Common myeloid progenitor, CD34-positive (primary cell): ENCODE measurements at regions of chr17 and their contacts with region 1.

Region 1: GRCh38 chr17:17120701-17121100 is 78.4 kb downstream of the MPRIP start:
- DNase-seq: no peak
- H3K4me3 ChIP-seq: no peak overlapping the region
- H3K27ac ChIP-seq: peak overlapping the region; percentile 0 to 6
- H3K4me1 ChIP-seq: peaks cover 3 to 38% (median 31%) of the 10 kb centered on the region in 4 experiments
- H3K27me3 ChIP-seq: no peaks in the 10 kb centered on the region

Region 2: DNA sequence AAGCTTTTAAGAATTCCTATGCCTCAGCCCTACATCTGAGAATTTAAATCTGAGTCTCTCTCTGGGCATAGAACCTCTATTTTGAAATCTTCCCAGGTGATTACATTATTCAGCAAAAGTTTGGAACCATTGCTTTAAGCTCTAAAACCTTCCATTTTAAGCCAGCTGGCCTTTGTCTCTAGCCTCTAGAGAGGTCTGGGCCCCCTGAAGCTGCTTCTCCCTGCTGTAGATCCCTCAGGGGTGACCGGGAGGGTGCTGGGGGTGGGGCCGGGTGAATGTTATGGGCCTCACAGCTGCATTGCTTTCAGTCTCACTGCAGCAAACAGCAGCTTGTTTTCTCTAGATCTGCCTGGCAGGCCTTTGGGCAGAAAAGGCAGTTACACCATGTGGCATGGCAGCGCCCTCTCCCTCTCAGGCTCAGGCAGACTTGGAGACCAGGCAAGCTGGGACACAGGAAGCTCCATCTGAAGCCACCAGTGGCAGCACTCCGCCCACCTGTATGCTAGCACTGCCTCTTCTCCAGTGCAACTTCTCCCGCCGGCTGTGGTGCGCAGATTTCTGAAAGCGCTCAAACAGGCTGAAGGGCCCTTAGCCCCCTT is 12.2 kb before region 1 on chr17:
- CTCF ChIA-PET with region 1: interaction called, 28 read pairs
- POLR2A ChIA-PET with region 1: no interaction called
- DNase-seq: no peak
- H3K4me3 ChIP-seq: no peak overlapping the region
- H3K27ac ChIP-seq: peak overlapping the region in 1 of 2 experiments; percentile 6
- H3K4me1 ChIP-seq: peaks cover 0 to 26% (median 8%) of the 10 kb centered on the region in 4 experiments
- H3K27me3 ChIP-seq: no peaks in the 10 kb centered on the region